Activated naive CD4-positive, alpha-beta T cell treated with anti-CD3 and anti-CD28 coated beads, Interleukin-2, amount 10 ng/mL, durations not matched to agents 7 days and 5 days (primary cell): ENCODE measurements at regions of chr5 and their contacts with region 1.

Region 1: DNA sequence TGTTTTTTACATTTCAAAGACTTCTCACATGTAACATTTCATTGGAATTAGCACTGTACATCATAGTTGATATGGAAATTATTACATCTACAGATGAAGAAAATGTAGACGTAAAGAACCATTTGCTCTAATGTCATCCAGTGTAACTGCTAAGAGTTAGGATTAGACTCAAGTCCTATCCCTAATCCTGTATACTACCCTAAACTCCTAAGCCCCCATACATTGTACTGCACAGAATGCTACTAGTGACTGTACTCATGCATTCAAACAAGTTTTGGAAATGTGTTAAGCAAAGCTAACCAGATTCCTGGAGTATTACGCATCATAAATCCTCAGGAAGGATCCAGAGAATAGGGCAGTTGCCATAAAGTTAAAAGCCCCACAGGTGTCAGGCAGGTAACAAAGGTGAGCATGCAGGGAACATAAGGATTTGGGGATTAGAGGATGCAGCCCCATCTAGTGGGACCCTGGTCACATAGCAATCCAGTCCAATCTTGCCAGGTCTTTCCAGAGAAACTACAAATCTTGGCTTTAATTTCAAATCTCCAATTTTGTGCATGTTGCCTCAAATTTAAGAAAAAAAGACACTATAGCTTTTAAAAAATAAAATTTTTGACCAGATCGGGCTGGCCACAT is 32.0 kb downstream of the HAVCR1 start:
- DNase-seq: no peak
- H3K4me3 Mint-ChIP-seq: no peak overlapping the region
- H3K27ac Mint-ChIP-seq: peak overlapping the region; percentile 81
- H3K4me1 Mint-ChIP-seq: peaks cover 90% of the 10 kb centered on the region
- H3K27me3 Mint-ChIP-seq: no peaks in the 10 kb centered on the region

Region 2: DNA sequence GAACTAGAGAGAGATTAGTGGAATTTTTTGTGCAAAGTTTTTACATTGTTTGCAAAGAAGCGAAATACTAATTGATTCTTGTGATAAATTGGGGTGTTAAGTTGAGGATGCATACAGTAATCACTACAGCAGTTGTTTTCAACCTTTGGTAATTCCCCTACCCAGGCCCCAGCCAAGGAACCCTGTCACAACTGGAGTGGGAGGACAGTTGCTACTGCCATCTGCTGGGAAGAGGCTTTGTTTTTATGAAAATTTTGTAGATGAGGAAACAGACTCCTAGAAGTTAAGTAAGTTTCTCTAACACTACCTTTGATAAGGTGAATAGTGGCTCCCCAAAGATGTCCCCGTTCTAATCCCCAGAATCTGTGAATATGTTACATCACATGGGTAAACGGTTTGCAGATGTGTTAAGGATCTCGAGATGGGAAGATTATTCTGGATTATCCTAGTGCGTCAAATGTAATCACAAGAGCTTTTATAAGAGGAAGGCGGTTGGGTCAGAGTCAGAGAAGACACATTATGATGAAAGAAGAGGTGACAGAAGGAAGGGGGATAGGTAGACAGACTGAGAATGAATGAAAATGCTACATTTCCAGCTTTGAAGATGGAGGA is 210.8 kb before region 1 on chr5:
- CTCF ChIA-PET with region 1: interaction called, 14 read pairs
- DNase-seq: peak; percentile 56
- H3K4me3 Mint-ChIP-seq: no peak overlapping the region
- H3K27ac Mint-ChIP-seq: no peak overlapping the region
- H3K4me1 Mint-ChIP-seq: peaks cover 4% of the 10 kb centered on the region
- H3K27me3 Mint-ChIP-seq: no peaks in the 10 kb centered on the region

Region 3: DNA sequence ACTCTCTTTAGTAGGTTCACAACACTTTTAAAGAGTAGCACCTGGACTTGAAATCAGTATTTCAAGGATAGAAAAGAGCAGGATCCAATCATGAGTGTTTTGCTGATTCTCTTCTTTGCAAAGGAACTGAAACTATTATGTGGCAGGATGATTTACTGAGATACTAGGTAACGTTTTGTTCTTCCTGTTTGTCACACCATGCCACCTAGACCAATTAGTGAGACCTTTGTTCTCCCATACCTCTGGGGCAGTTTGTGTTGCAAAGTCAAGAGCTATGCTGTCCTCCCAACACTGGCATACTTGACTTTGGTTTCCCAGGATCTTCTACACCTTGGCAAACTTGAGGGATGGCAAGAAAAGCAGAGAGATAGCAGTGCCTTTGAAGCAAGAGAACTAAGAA is 133.4 kb before region 1 on chr5:
- CTCF ChIA-PET with region 1: interaction called, 15 read pairs
- DNase-seq: no peak
- H3K4me3 Mint-ChIP-seq: no peak overlapping the region
- H3K27ac Mint-ChIP-seq: peak overlapping the region; percentile 92
- H3K4me1 Mint-ChIP-seq: peaks cover 52% of the 10 kb centered on the region
- H3K27me3 Mint-ChIP-seq: no peaks in the 10 kb centered on the region

Region 4: DNA sequence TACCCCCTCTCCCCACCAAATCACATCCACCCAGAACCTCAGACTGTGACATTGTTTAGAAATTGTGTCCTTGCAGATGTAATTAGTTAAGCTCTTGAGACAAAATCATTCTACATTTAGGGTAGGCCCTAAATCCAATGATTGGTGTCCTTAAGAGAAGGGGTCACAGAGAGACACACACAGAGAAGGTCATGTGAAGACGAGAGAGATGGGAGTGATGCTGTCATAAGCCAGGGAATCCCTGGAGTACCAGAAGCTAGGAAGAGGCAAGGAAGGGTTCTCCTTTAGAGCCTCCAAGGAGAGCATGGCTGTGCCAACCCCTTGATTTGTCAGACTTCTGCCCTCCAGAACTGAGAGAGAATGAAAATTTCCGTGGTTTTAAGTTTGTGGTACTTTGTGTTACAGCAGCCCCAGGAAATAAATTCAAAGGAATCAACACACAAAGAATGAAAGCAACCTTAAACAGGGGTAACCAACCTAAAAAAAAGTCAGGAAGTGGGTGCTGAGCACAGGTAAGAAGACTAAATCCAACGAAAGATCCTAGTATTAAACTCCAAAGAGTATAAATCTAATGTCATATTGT is 97.5 kb before region 1 on chr5:
- CTCF ChIA-PET with region 1: interaction called, 36 read pairs
- DNase-seq: peak; percentile 28
- H3K4me3 Mint-ChIP-seq: no peak overlapping the region
- H3K27ac Mint-ChIP-seq: peak overlapping the region; percentile 86
- H3K4me1 Mint-ChIP-seq: peaks cover 90% of the 10 kb centered on the region
- H3K27me3 Mint-ChIP-seq: no peaks in the 10 kb centered on the region

Region 5: DNA sequence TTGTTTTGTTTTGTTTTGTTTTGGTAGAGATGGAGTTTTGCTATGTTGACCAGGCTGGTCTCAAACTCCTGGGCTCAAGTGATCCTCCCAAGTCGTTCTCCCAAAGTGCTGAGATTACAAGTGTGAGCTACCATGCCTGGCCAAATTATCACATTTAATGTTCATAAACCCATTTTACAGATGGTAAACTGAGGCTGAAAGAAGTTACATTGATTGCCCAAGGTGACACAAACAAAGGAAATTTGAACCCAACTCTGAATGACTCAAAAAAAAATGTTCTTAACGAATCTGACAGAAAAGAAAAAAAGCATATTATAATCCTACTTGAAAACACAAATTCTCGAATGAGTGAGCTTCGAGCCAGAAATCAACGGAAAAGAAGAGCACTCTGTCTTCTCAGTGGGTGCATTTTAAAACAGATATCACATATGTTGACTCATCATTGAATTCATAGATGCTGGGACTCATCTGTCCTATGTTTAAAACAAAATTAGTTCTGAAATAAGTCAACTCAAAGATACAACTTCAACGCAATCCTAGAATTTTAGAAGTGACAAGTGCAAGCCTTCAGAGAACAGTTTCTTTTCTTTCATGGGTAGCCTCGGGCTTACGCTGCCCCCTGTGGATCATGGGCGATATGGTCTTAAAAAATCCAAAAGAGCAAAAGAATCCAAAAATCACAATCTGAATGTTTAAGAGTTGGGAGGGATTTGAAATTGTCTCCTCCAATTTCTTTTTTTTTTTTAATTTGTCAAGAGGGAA is 92.3 kb before region 1 on chr5:
- CTCF ChIA-PET with region 1: interaction called, 36 read pairs
- DNase-seq: peak; percentile 78
- H3K4me3 Mint-ChIP-seq: no peak overlapping the region
- H3K27ac Mint-ChIP-seq: peak overlapping the region; percentile 69
- H3K4me1 Mint-ChIP-seq: peaks cover 76% of the 10 kb centered on the region
- H3K27me3 Mint-ChIP-seq: no peaks in the 10 kb centered on the region

Region 6: DNA sequence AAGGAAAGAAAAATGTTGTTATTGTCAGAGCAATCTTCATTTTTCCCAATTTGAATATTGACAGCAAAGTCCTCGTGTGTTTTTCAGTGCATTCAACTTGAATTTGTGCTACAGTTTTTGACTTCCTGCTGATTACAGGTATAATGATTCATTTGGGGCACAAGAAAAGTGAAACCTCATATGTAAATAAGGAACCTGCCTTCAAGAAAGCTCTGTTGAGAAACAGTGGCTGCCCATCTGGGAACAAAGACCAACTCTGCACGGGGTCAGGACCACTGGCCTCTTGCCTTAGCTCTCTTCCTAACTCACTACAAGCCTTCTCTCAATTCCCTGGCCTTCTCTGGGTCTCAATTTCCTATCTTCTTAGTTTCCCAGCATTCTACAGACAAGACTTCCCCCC is 84.8 kb before region 1 on chr5:
- CTCF ChIA-PET with region 1: interaction called, 36 read pairs
- DNase-seq: peak; percentile 32
- H3K4me3 Mint-ChIP-seq: no peak overlapping the region
- H3K27ac Mint-ChIP-seq: peak overlapping the region; percentile 90
- H3K4me1 Mint-ChIP-seq: peaks cover 41% of the 10 kb centered on the region
- H3K27me3 Mint-ChIP-seq: no peaks in the 10 kb centered on the region

Region 7: GRCh38 chr5:157130925-157131324 is 104.0 kb after region 1 on chr5:
- CTCF ChIA-PET with region 1: interaction called, 20 read pairs
- DNase-seq: no peak
- H3K4me3 Mint-ChIP-seq: no peak overlapping the region
- H3K27ac Mint-ChIP-seq: no peak overlapping the region
- H3K4me1 Mint-ChIP-seq: peaks cover 39% of the 10 kb centered on the region
- H3K27me3 Mint-ChIP-seq: no peaks in the 10 kb centered on the region

Region 8: GRCh38 chr5:157502143-157502647 is 475.3 kb after region 1 on chr5:
- CTCF ChIA-PET with region 1: no interaction called
- DNase-seq: no peak
- H3K4me3 Mint-ChIP-seq: no peak overlapping the region
- H3K27ac Mint-ChIP-seq: peak overlapping the region; percentile 49
- H3K4me1 Mint-ChIP-seq: peaks cover 33% of the 10 kb centered on the region
- H3K27me3 Mint-ChIP-seq: no peaks in the 10 kb centered on the region

Region 9: GRCh38 chr5:157640406-157641066 is 613.6 kb after region 1 on chr5:
- CTCF ChIA-PET with region 1: no interaction called
- DNase-seq: no peak
- H3K4me3 Mint-ChIP-seq: no peak overlapping the region
- H3K27ac Mint-ChIP-seq: no peak overlapping the region
- H3K4me1 Mint-ChIP-seq: no peaks in the 10 kb centered on the region
- H3K27me3 Mint-ChIP-seq: peaks cover 17% of the 10 kb centered on the region